Panc1 (cell line): ENCODE measurements at regions of chr4 and their contacts with region 1.

Region 1: GRCh38 chr4:114318309-114318708 is 280.3 kb upstream of the UGT8 start:
- DNase-seq: no peak
- ATAC-seq: no peak
- H3K4me3 ChIP-seq: no peak overlapping the region
- H3K27ac ChIP-seq: no peak overlapping the region
- H3K4me1 ChIP-seq: no peaks in the 10 kb centered on the region
- H3K27me3 ChIP-seq: no peaks in the 10 kb centered on the region
- CTCF ChIP-seq: no peak

Region 2: DNA sequence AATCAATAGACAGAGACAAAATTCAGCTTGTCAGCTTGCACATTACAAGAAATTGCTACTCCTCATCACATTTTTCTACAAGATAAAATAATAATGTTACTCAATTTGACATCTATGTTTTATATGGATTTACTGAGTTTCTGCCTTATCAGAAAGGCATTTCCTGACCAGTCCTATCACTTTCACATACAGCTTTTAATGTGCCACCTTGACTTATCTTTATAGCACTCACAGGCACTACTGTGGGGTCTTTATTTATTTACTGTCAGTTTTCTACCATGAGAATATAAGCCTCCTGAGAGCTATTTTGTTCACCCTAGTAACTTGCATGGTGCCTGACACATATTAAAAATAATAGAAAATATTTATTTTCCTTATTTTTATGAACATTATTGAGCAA is 789.1 kb after region 1 on chr4:
- CTCF ChIA-PET with region 1: no interaction called
- POLR2A ChIA-PET with region 1: no interaction called
- in situ Hi-C with region 1: no loop called
- intact Hi-C with region 1: loop called (anchors 5 kb)
- DNase-seq: no peak
- ATAC-seq: no peak
- H3K4me3 ChIP-seq: no peak overlapping the region
- H3K27ac ChIP-seq: no peak overlapping the region
- H3K4me1 ChIP-seq: no peaks in the 10 kb centered on the region
- H3K27me3 ChIP-seq: no peaks in the 10 kb centered on the region
- CTCF ChIP-seq: no peak